Activated T-helper 1 cell treated with anti-CD3 and anti-CD28 coated beads, Interleukin-12 subunit alpha, Interleukin-12 subunit beta, Interleukin-2, Interleukin-4 antibody, amounts not matched to agents 30 ng/mL and 10 ng/mL and 1 ng/mL, durations not matched to agents 14 hours and 24 hours and 36 hours (primary cell): ENCODE measurements at regions of chr11 and their contacts with region 1.

Region 1: DNA sequence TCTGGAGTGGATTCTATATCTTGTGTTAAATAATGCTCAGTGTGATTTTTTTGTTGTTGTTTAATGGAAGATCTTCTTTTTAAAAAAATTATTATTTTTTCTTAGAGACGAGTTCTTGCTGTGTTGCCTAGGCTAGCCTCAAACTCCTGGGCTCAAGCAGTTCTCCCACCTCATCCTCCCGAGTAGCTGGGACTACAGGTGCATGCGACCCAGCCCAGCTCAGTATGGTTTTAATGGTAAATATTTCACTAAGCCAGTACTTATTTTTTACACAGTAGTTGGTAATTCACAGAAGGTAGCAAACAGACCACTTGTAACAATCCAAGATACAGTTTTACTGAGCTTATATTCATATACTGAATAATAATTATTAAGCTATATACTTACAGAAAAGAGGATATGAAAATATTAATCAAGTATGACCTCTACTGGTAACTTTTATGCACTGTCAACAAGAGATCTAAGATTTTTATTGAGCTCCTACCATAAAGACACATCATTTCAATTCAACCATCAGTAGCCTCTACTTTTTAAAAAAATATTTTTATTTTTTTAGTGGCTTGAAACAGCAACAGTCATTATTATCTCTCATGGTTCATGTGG is 6.1 kb upstream of the CD59 start:
- DNase-seq: no peak
- H3K4me3 Mint-ChIP-seq: no peak overlapping the region
- H3K27ac Mint-ChIP-seq: no peak overlapping the region
- H3K4me1 Mint-ChIP-seq: no peaks in the 10 kb centered on the region
- H3K27me3 Mint-ChIP-seq: no peaks in the 10 kb centered on the region

Region 2: DNA sequence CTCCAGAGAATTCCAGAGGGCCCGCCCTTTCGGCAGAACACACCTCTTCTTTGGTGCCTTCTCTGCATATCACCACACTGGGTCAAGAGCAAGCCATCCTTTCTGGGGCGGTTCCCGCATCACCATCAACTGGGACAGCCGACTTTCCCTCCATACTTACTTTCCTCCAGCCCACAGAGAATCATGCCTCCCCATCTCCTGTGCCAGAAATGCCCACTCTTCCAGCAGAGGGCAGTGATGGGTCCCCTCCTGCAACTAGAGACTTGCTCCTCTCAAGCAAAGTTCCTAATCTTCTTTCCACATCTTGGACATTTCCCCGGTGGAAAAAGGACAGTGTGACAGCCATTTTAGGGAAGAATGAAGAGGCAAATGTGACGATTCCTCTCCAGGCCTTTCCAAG is 199.4 kb before region 1 on chr11:
- intact Hi-C with region 1: loop called (anchors 1 kb)
- DNase-seq: no peak
- H3K4me3 Mint-ChIP-seq: no peak overlapping the region
- H3K27ac Mint-ChIP-seq: no peak overlapping the region
- H3K4me1 Mint-ChIP-seq: peaks cover 7% of the 10 kb centered on the region
- H3K27me3 Mint-ChIP-seq: peaks cover 23% of the 10 kb centered on the region

Region 3: DNA sequence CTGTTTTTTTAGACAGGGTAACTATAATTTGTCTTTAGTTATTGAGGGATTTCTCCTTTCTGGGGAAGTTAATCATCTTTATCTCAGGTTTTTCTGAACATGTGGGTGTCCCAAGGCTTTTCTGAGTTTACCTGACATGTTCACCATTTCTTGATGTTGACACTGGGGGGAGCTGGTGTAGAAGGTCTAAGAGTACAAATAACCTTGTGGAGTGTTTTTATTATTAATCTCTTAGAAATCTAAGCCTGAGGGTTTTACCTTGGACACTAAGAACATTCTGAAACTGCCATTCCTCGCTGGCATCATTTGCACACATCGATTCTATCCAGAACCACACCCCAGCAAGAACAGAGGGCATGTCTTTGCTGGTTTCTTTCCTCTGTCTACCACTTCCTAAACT is 26.1 kb before region 1 on chr11:
- intact Hi-C with region 1: loop called (anchors 1 kb)
- DNase-seq: no peak
- H3K4me3 Mint-ChIP-seq: no peak overlapping the region
- H3K27ac Mint-ChIP-seq: no peak overlapping the region
- H3K4me1 Mint-ChIP-seq: peaks cover 15% of the 10 kb centered on the region
- H3K27me3 Mint-ChIP-seq: no peaks in the 10 kb centered on the region